MCF 10A (cell line): ENCODE measurements at regions of chr5 and their contacts with region 1.

Region 1: DNA sequence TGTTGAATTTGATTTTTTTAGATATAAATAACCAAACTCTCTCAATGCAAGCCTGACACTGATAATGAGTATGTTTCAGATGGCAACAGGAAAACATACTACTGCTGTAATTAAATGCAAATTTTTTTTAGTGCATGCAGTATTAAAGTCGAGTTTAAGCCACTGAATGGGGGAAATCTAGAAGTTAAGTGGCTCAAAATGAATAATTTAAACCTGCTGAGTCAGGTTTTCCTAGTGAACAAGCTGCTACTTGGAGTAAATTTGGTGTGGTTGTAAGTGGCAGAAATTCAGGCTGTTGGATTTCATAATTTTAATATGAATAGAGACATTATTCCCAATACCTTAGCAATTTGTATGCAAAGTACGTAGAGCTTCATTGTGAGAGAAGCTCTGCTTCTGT is 121.8 kb downstream of the SLF1 start:
- DNase-seq: no peak
- H3K4me3 Mint-ChIP-seq: no peak overlapping the region
- H3K27ac Mint-ChIP-seq: peak overlapping the region; percentile 31
- H3K4me1 Mint-ChIP-seq: no peaks in the 10 kb centered on the region
- H3K27me3 Mint-ChIP-seq: no peaks in the 10 kb centered on the region
- CTCF ChIP-seq: no peak

Region 2: DNA sequence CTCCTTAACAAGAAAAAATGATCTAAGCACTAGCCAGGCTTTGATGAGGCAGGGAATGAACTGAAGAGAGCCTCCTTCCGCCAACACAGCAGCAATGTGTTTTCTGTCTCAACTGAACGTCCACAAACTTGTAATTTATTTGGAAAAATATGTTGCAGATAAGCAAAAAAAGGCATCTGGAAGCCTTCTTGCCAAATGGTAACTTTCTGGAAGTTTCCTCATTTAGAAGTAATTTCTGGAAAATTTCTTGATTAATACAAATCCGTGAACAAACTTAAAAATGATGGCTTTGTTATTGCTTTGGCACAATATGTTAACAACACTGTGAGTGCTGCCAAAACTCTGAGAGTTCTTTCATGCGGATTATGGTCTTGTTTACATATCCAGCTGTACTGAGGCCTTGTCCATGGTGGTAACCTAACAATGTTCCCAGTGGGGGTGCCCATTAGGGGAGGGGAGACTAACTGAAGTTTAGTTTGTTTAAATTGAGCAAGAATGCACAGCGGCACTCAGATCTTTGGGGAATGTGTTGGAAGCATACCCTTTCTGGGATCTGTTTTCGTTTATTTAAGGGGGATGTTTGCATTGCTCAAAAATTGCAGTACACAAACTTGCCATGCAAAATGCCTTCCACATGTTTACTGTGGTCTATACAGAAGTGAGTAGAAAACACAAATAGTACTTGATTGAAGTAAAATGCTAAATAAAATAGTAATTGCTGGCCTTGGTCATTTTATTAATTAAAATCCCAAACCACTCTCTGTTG is 1494.0 kb before region 1 on chr5:
- CTCF ChIA-PET with region 1: no interaction called
- POLR2A ChIA-PET with region 1: no interaction called
- intact Hi-C with region 1: no loop called
- DNase-seq: no peak
- H3K4me3 Mint-ChIP-seq: no peak overlapping the region
- H3K27ac Mint-ChIP-seq: no peak overlapping the region
- H3K4me1 Mint-ChIP-seq: no peaks in the 10 kb centered on the region
- H3K27me3 Mint-ChIP-seq: no peaks in the 10 kb centered on the region
- CTCF ChIP-seq: no peak

Region 3: GRCh38 chr5:94524841-94525697 is 215.2 kb before region 1 on chr5:
- CTCF ChIA-PET with region 1: interaction called, 29 read pairs
- POLR2A ChIA-PET with region 1: interaction called, 3 read pairs
- intact Hi-C with region 1: loop called (anchors 1 kb)
- DNase-seq: peak; percentile 45
- H3K4me3 Mint-ChIP-seq: no peak overlapping the region
- H3K27ac Mint-ChIP-seq: no peak overlapping the region
- H3K4me1 Mint-ChIP-seq: no peaks in the 10 kb centered on the region
- H3K27me3 Mint-ChIP-seq: no peaks in the 10 kb centered on the region
- CTCF ChIP-seq: peak; percentile 68

Region 4: DNA sequence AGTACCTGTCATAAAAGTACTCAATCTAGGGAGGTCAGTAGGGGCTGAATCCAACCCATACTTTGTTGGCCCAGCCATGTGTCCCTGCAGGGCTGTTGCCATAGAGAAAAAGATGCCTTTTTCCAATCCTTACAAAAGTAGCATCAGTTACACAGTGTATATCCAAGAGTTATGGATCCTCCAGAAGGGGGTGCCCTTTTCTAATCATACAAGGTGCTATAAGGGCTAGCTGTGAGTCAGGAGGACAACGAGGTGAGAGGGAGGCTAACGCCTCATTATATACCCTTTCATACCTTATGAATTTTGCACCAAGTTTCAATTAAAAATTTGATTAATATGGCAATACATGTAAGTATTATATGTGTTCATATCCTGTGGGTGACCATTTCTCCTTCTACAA is 126.7 kb before region 1 on chr5:
- CTCF ChIA-PET with region 1: interaction called, 6 read pairs
- POLR2A ChIA-PET with region 1: no interaction called
- intact Hi-C with region 1: loop called (anchors 2 kb)
- DNase-seq: peak; percentile 67
- H3K4me3 Mint-ChIP-seq: no peak overlapping the region
- H3K27ac Mint-ChIP-seq: no peak overlapping the region
- H3K4me1 Mint-ChIP-seq: no peaks in the 10 kb centered on the region
- H3K27me3 Mint-ChIP-seq: no peaks in the 10 kb centered on the region
- CTCF ChIP-seq: peak; percentile 14

Region 5: GRCh38 chr5:94725142-94725541 is 15.1 kb before region 1 on chr5:
- CTCF ChIA-PET with region 1: interaction called, 11 read pairs
- POLR2A ChIA-PET with region 1: no interaction called
- intact Hi-C with region 1: no loop called
- DNase-seq: no peak
- H3K4me3 Mint-ChIP-seq: no peak overlapping the region
- H3K27ac Mint-ChIP-seq: no peak overlapping the region
- H3K4me1 Mint-ChIP-seq: no peaks in the 10 kb centered on the region
- H3K27me3 Mint-ChIP-seq: no peaks in the 10 kb centered on the region
- CTCF ChIP-seq: no peak

Region 6: GRCh38 chr5:94776167-94776566 is 35.9 kb after region 1 on chr5:
- CTCF ChIA-PET with region 1: no interaction called
- POLR2A ChIA-PET with region 1: no interaction called
- intact Hi-C with region 1: no loop called
- DNase-seq: no peak
- H3K4me3 Mint-ChIP-seq: no peak overlapping the region
- H3K27ac Mint-ChIP-seq: no peak overlapping the region
- H3K4me1 Mint-ChIP-seq: no peaks in the 10 kb centered on the region
- H3K27me3 Mint-ChIP-seq: no peaks in the 10 kb centered on the region
- CTCF ChIP-seq: no peak

Region 7: GRCh38 chr5:94788527-94788926 is 48.2 kb after region 1 on chr5:
- CTCF ChIA-PET with region 1: no interaction called
- POLR2A ChIA-PET with region 1: no interaction called
- intact Hi-C with region 1: no loop called
- DNase-seq: peak; percentile 8
- H3K4me3 Mint-ChIP-seq: no peak overlapping the region
- H3K27ac Mint-ChIP-seq: no peak overlapping the region
- H3K4me1 Mint-ChIP-seq: no peaks in the 10 kb centered on the region
- H3K27me3 Mint-ChIP-seq: no peaks in the 10 kb centered on the region
- CTCF ChIP-seq: no peak

Region 8: GRCh38 chr5:95043234-95043633 is 302.9 kb after region 1 on chr5:
- CTCF ChIA-PET with region 1: no interaction called
- POLR2A ChIA-PET with region 1: no interaction called
- intact Hi-C with region 1: no loop called
- DNase-seq: no peak
- H3K4me3 Mint-ChIP-seq: no peak overlapping the region
- H3K27ac Mint-ChIP-seq: no peak overlapping the region
- H3K4me1 Mint-ChIP-seq: peaks cover 9% of the 10 kb centered on the region
- H3K27me3 Mint-ChIP-seq: no peaks in the 10 kb centered on the region
- CTCF ChIP-seq: no peak